ENCODE measurements at regions of chr10 and their contacts with region 1.

Region 1: DNA sequence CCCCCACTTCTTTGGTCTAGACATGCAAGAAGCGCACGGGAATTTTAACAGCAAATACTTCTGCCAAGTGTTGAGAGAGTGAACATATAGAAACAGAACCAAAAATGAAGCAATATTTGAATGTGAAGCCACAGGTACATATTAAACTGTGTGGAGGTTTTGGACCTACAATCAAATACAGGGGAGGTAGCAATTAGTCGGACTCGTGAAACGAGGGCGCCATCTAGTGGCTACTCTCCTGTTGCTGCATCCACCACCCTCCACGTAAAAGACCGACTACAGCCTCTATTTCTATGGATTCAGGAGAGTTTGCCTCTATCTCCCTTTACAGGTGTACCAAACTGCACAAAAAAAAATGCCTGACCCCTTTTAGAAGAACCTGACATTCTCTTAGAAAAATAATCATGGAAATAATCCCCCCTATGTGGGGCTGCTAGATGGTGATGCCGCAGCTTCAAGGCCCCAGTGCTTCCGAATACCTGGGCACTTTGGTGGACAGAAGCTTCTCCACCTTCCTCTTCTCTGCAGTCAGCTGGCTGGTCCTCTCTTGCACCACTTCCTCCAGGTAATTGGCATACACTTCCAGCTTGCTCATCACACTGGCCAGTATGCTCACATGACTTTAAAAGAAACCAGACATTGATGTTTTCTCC is 31.7 kb downstream of the TECTB start:
- H3K4me3 Mint-ChIP-seq: no peak overlapping the region
- H3K27ac Mint-ChIP-seq: no peak overlapping the region
- H3K4me1 Mint-ChIP-seq: no peaks in the 10 kb centered on the region
- H3K27me3 Mint-ChIP-seq: peaks cover 45% of the 10 kb centered on the region

Region 2: DNA sequence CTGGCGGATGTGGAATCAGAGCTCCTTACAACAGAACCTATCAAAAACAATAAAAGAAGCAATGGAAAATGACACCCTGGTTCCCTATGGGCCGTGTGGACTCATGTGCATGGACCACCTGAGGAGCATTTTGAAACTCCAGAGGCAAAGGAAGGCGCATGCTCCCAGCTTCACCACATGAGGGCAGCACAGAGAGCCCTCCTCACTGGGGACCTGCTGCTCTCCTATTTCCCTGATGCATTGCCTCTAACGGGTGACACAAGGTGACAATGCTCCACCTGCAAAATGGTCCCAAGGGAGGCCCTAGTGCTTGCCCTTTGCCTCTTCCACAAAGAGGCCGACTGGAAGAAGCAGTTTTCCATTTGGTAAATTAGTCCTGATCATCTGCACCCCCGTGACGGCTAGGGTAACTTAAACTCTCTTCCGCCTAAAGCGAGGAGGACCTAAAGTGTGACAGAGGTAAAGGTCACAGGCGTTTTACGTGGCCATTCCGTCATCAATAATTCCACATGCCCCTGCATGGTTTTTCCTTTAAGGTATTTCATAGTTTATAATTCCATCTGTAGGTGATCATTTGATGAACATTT is 199.1 kb before region 1 on chr10:
- intact Hi-C with region 1: loop called (anchors 1 kb)
- H3K4me3 Mint-ChIP-seq: no peak overlapping the region
- H3K27ac Mint-ChIP-seq: no peak overlapping the region
- H3K4me1 Mint-ChIP-seq: no peaks in the 10 kb centered on the region
- H3K27me3 Mint-ChIP-seq: no peaks in the 10 kb centered on the region

Region 3: GRCh38 chr10:112389147-112389822 is 74.3 kb after region 1 on chr10:
- intact Hi-C with region 1: no loop called
- H3K4me3 Mint-ChIP-seq: no peak overlapping the region
- H3K27ac Mint-ChIP-seq: peak overlapping the region; percentile 52
- H3K4me1 Mint-ChIP-seq: peaks cover 34% of the 10 kb centered on the region
- H3K27me3 Mint-ChIP-seq: no peaks in the 10 kb centered on the region

Region 4: DNA sequence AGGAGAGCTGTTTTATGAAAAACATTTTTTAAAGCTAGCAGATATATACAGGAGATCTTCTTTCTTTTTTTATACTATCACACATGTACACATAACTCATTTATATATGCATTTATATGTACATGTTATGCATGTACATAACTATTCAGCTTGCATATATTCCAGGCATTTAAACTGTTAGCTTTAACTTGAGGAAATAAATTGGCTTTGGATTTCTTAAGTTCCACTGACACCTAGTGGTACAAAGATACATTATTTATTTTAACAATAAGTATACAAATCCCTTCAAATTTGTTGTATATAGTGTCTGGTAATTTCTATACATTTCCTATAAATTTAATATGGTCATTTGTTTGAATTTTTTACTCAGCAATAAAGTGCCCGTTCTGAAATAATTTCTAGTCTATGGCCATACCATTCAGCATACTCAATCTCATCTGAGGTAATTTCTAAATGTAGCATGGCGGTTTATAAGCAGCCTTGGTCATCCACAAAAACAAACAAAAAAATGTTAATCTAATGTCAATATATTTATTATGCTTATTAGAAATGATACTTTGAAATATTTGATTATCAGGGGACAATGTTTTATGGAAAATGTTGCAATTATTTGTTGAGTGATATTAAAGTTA is 120.2 kb after region 1 on chr10:
- intact Hi-C with region 1: loop called (anchors 1 kb)
- H3K4me3 Mint-ChIP-seq: no peak overlapping the region
- H3K27ac Mint-ChIP-seq: no peak overlapping the region
- H3K4me1 Mint-ChIP-seq: peaks cover 4% of the 10 kb centered on the region
- H3K27me3 Mint-ChIP-seq: no peaks in the 10 kb centered on the region